Activated naive CD4-positive, alpha-beta T cell treated with anti-CD3 and anti-CD28 coated beads for 36 hours (primary cell): ENCODE measurements at regions of chrX and their contacts with region 1.

Region 1: DNA sequence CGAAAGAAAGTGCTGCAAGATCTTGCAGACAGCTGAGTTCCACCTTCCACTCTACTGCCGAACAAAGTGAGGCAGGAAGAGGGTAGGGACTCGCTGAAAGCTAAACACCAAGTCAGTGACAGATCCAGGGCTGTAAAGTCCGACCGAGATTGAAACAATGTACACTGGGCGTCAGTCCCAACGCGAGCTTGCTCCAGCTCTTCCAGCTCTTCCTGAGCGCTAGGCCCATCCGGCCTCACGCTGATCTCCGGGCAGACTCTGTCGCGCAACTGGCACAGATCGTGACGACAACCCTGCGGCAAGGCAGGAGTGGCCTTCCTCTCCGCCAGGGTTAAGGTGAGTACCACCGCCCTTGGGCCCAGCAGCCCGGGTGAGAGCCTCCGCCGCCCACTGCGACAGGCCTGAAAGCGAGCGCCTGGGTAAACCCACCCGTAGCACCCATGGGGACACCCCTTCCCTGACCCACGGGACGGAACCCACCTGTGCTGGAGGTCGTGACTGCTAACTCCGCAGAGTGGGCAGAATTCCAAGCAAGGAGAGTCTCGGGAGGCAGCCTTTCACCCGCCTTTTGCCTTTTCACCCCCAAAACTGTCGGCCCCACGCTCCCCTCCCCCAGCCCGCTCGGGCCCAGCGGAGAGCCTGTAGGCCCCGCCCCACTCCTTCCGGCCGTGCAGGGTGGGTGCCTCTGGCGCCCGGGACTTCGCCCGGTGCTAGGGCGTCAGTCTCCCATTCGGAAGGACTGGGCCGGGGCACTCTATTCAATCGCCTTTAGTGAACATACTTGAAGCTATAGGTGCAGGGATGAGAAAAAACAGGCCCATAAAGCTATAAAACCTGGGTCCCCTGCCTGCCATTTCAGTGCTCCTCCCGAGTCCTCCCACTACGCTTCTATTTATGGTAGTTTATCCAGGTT is at the start of gene TMLHE:
- DNase-seq: peak; percentile 71
- H3K4me3 Mint-ChIP-seq: peak within 1 kb of the TSS; percentile 83
- H3K27ac Mint-ChIP-seq: peak within 1 kb of the TSS; percentile 92
- H3K4me1 Mint-ChIP-seq: peaks cover 22% of the 10 kb centered on the region
- H3K27me3 Mint-ChIP-seq: no peaks in the 10 kb centered on the region
- total RNA-seq, gene TMLHE: 13.2 to 14.7 TPM

Region 2: DNA sequence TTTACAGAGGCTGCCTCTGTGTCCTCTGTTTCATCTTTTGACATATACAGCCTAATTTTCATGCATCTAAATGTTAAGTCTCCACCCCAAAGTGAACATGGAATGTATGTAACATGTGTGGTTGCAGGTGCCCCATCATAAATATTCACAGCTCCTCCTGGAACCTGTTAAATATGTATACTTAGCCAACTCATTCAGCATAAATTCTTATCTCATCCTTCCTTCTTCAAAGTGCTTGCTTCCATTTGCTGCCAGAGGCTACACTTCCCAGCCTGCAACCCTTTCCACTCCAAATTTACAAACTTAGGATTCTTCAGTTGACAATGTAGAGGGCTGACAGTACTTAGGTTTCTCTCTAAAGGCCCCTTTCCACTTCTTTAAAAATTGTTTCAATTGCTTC is 650.6 kb before region 1 on chrX:
- CTCF ChIA-PET with region 1: no interaction called
- intact Hi-C with region 1: no loop called
- DNase-seq: no peak
- H3K4me3 Mint-ChIP-seq: no peak overlapping the region
- H3K27ac Mint-ChIP-seq: no peak overlapping the region
- H3K4me1 Mint-ChIP-seq: no peaks in the 10 kb centered on the region
- H3K27me3 Mint-ChIP-seq: no peaks in the 10 kb centered on the region

Region 3: GRCh38 chrX:155544881-155545280 is 67.7 kb before region 1 on chrX:
- CTCF ChIA-PET with region 1: no interaction called
- intact Hi-C with region 1: no loop called
- DNase-seq: no peak
- H3K4me3 Mint-ChIP-seq: no peak overlapping the region
- H3K27ac Mint-ChIP-seq: no peak overlapping the region
- H3K4me1 Mint-ChIP-seq: peaks cover 2% of the 10 kb centered on the region
- H3K27me3 Mint-ChIP-seq: no peaks in the 10 kb centered on the region

Region 4: GRCh38 chrX:155682834-155683233 is 70.3 kb after region 1 on chrX:
- CTCF ChIA-PET with region 1: no interaction called
- intact Hi-C with region 1: no loop called
- DNase-seq: no peak
- H3K4me3 Mint-ChIP-seq: no peak overlapping the region
- H3K27ac Mint-ChIP-seq: no peak overlapping the region
- H3K4me1 Mint-ChIP-seq: no peaks in the 10 kb centered on the region
- H3K27me3 Mint-ChIP-seq: no peaks in the 10 kb centered on the region

Region 5: GRCh38 chrX:155881158-155881993 is 268.8 kb after region 1 on chrX and contains the start of gene VAMP7:
- CTCF ChIA-PET with region 1: no interaction called
- intact Hi-C with region 1: loop called (anchors 2 kb)
- DNase-seq: peak; percentile 88
- H3K4me3 Mint-ChIP-seq: peak within 1 kb of the TSS; percentile 89
- H3K27ac Mint-ChIP-seq: peak within 1 kb of the TSS; percentile 86
- H3K4me1 Mint-ChIP-seq: peaks cover 20% of the 10 kb centered on the region
- H3K27me3 Mint-ChIP-seq: no peaks in the 10 kb centered on the region
- total RNA-seq, gene VAMP7: 33.5 to 34.4 TPM